ENCODE measurements at regions of chr17 and their contacts with region 1.

Region 1: DNA sequence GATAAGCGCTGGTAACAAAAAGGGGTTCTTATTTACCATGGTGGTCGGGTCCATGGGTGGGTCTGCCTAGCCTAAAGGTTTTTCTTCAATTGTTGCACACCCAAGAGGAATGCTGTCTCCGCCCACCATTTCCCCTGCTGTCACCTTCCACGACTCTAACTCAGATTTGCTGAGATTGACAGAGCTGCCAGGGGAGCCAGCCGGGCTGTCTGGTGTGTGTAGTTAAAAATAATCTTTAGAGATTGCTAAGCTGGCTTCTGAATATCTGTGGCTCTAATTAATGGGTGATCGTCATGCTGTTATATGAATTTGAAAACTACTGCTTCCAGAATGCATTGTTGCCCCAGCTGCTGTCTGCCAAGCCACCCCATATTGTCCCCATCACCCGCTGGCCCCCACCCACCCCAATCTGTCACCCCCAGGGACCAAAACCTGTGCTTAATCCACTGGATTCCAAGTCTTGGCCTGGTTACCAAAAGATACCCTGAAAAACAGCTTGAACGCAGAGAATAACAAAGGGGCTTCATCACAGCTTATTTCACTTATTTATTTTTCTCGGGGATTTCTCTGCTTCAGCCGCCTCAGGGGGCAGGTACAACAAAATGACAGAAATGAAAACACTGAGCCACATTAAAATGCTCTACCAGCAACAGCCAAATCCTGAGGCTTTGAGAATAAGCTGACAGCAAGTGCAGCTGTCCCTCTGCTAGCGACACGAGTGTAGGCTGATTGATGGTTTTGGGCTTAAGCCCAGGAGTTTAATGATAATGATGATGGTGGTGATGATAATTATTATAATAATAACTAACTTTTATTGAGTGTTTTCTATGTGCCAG is 46.1 kb upstream of the NLK start:
- DNase-seq: no peak
- H3K4me3 Mint-ChIP-seq: no peak overlapping the region
- H3K27ac Mint-ChIP-seq: no peak overlapping the region
- H3K4me1 Mint-ChIP-seq: no peaks in the 10 kb centered on the region
- H3K27me3 Mint-ChIP-seq: peaks cover 3% of the 10 kb centered on the region

Region 2: DNA sequence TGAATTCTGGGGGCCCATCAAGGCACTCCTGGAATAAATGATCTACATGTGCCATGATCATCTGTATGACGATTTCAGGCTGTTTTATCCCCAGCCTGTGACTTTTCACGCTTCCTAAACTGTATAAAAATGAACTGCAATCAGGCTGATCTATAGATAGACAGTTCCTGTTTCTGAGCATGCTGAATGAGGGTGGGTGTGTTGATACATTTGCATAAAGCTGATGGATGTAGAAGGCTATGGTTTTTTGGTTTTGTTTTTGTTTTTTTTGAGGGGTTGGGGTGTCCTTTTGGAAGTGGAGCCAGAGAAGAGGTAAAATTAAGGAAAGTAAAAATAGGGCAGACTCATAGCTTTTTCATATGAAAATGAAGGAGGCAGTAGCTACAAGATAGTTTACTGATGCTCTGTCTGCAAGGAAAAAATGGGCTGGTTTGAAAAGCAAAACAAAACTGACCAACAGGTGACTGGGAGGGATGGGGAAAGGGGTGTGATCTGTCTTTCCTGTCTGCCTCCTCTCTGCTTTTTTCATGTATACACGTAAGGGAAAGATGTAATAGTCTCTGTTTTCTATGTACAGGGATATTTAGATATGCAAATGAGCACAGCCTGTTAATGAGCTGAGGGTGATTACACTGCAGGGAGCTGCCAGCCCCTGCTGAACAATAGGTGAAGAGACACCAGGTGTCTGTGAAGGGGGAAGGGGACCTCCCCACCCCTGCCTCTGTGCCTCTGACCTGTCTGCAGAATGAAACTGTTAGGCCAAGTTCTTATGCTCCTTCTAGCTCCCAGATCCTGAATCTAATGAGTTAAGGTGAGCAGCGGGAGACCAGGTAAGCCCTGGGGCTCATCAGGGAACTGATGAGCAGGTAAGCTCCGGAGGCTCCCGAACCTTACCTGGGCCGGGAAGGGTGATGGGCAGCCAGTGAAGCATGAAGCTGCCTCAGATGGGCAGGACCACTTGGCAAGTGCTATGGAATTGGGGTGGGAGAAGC is 56.7 kb before region 1 on chr17:
- CTCF ChIA-PET with region 1: no interaction called
- intact Hi-C with region 1: no loop called
- DNase-seq: no peak
- H3K4me3 Mint-ChIP-seq: no peak overlapping the region
- H3K27ac Mint-ChIP-seq: no peak overlapping the region
- H3K4me1 Mint-ChIP-seq: no peaks in the 10 kb centered on the region
- H3K27me3 Mint-ChIP-seq: peaks cover 10% of the 10 kb centered on the region

Region 3: GRCh38 chr17:28398280-28398981 is 402.0 kb after region 1 on chr17:
- CTCF ChIA-PET with region 1: no interaction called
- intact Hi-C with region 1: no loop called
- DNase-seq: no peak
- H3K4me3 Mint-ChIP-seq: no peak overlapping the region
- H3K27ac Mint-ChIP-seq: no peak overlapping the region
- H3K4me1 Mint-ChIP-seq: peaks cover 4% of the 10 kb centered on the region
- H3K27me3 Mint-ChIP-seq: no peaks in the 10 kb centered on the region

Region 4: GRCh38 chr17:28446728-28447395 is 450.4 kb after region 1 on chr17:
- CTCF ChIA-PET with region 1: no interaction called
- intact Hi-C with region 1: loop called (anchors 5 kb)
- DNase-seq: no peak
- H3K4me3 Mint-ChIP-seq: no peak overlapping the region
- H3K27ac Mint-ChIP-seq: no peak overlapping the region
- H3K4me1 Mint-ChIP-seq: no peaks in the 10 kb centered on the region
- H3K27me3 Mint-ChIP-seq: peaks cover 5% of the 10 kb centered on the region